ENCODE measurements at regions of chr1 and their contacts with region 1.

Region 1: DNA sequence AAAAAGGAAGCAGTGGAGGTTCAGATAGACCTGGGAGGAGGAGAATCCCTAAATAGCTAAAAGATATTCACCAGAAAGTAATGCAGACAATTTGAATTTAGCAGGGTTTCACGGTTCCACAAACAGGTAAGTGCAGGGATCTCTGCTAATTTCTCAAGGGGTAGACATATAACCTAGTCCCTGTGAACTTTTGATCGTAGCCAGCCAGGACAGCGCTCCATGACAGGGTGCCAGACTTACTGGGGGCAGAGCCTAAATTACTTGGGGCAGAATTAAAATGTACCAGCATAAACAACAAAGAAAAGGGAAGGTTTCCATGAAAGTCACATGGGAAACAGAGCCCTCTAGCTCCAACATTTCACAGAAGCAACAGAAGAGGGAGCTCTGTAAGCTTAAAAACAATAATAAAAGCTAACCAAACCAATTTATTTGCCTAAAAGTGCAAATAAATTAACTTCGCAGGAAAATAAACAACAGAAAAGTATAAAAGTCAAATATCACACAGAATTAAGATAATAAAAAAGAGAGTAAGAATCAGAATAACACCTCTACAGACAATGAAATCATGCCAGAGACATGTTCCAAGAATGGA is 198.3 kb downstream of the DUSP10 start:
- DNase-seq: peak; percentile 54
- ATAC-seq: peak; percentile 60
- H3K4me3 ChIP-seq: no peak overlapping the region
- H3K27ac ChIP-seq: no peak overlapping the region
- H3K4me1 ChIP-seq: no peaks in the 10 kb centered on the region
- H3K27me3 ChIP-seq: no peaks in the 10 kb centered on the region
- CTCF ChIP-seq: peak; percentile 65
- POLR2A ChIP-seq: no peak
- RAD21 ChIP-seq: peak; percentile 64

Region 2: DNA sequence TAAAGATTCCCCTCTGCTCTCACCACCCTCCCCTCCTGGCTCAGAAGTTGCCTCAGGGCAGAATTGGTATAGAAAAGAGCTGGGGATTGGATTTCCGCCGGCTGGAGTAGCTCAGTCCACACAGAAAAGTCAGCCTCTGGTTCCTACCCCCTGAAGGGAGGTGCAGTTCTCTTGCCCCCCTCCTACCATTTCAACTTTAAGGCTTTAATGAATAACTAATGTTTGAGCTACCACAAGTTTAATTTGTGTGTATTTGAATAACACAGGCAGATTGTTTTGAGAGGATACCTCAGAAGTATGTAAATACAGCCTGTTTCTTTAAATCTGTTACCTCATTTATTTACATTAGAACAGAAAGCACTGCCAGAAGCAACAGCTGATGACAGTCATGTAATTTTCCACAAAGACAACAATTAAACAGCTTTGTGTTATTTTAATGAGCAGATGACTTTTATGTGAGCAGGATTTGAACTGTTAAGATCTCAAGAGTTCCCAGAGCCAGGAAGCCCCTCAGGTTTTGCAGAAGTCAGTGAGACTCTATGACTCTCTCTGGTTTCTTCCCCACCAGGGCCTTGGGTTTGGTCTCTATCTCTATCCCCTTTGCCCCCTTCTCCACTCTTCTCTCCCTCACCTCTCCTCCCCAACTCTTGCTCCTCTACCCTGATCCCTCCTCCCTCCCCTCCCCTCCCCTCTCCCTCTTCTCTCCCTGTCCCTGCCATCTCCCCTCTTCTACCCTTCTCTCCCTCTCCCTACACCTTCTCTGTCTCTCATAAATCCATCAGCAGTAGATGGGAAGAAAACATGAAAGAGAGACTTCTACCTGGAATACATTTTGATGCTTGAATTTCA is 171.9 kb after region 1 on chr1:
- CTCF ChIA-PET with region 1: no interaction called
- POLR2A ChIA-PET with region 1: no interaction called
- dilution Hi-C with region 1: no loop called
- in situ Hi-C with region 1: no loop called
- intact Hi-C with region 1: loop called (anchors 5 kb)
- DNase-seq: peak; percentile 77
- ATAC-seq: peak; percentile 28
- H3K4me3 ChIP-seq: no peak overlapping the region
- H3K27ac ChIP-seq: peak overlapping the region; percentile 90
- H3K4me1 ChIP-seq: peaks cover 57% of the 10 kb centered on the region
- H3K27me3 ChIP-seq: no peaks in the 10 kb centered on the region
- CTCF ChIP-seq: no peak
- POLR2A ChIP-seq: no peak
- RAD21 ChIP-seq: no peak

Region 3: DNA sequence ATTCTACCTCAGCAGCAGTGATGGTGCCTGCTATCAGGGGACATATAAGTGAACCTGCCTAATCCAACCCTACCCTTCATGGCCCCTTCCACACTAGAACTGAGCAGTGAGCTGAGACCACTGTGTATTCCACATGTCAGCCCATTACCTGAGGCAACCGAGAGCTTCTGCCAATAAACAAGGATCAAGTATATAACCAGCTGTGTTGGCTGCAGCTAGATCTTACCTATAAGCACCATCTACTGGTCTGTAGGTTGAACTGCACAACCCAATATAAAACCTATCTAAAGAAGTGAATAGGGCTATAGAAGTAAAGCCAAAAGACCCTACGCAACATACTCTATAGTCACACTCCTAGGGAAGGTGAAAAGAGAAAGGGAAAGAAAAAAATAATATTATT is 627.4 kb after region 1 on chr1:
- CTCF ChIA-PET with region 1: no interaction called
- POLR2A ChIA-PET with region 1: no interaction called
- dilution Hi-C with region 1: no loop called
- in situ Hi-C with region 1: no loop called
- intact Hi-C with region 1: loop called (anchors 1 kb)
- DNase-seq: peak; percentile 70
- ATAC-seq: peak; percentile 68
- H3K4me3 ChIP-seq: no peak overlapping the region
- H3K27ac ChIP-seq: no peak overlapping the region
- H3K4me1 ChIP-seq: peaks cover 2% of the 10 kb centered on the region
- H3K27me3 ChIP-seq: no peaks in the 10 kb centered on the region
- CTCF ChIP-seq: peak; percentile 58
- POLR2A ChIP-seq: no peak
- RAD21 ChIP-seq: peak; percentile 76